Heart right ventricle (tissue), 16 donors: ENCODE measurements at regions of chr16 and their contacts with region 1.

Region 1: GRCh38 chr16:27639561-27640276 is 89.8 kb downstream of the KATNIP start:
- DNase-seq: peak in 1 of 2 donors; percentile 16
- ATAC-seq: peak in 7 of 8 donors; percentile 49 to 80 (median 69)
- H3K4me3 ChIP-seq: no peak overlapping the region
- H3K27ac ChIP-seq: no peak overlapping the region
- H3K4me1 ChIP-seq: no peaks in the 10 kb centered on the region
- H3K27me3 ChIP-seq: no peaks in the 10 kb centered on the region
- CTCF ChIP-seq: peak; percentile 12 to 68 (median 61)

Region 2: DNA sequence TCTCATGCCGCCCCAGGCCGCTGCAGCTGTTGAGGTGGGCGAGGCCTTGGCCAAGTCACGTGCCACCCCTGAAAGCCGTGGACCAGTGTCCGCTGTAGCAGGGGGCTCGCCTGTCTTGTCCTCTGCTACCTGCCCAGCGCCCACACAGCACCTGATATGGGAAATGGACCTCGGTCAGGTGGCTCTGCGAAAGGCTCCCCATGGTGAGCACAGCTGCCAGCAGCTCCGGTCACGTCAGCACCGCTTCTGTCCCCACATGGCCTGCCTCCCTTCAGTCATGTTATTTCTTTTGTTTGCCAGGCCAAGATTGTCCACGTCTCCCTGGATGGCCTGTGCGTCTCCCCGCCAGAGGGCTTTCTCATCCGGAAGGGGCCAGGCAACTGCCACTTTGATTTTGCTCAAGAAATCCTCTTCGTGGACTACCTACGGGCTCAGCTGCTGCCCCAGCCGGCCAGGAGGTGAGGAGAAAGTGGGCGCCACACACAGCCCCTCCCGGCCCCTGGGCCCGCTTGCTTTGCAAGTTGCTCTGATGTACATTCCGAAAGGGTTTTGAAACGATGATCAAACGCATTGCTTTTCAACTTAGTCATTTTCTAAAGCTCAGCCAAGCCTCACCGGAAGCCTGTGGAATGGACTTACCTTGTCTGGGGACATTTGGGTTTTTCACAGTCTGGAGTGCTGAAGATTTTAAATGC is 130.0 kb after region 1 on chr16:
- intact Hi-C with region 1: loop called in 1 of 10 experiments (anchors 10 kb)
- DNase-seq: no peak
- ATAC-seq: peak in 2 of 8 donors; percentile 43 to 49
- H3K4me3 ChIP-seq: no peak overlapping the region
- H3K27ac ChIP-seq: no peak overlapping the region
- H3K4me1 ChIP-seq: no peaks in the 10 kb centered on the region
- H3K27me3 ChIP-seq: no peaks in the 10 kb centered on the region
- CTCF ChIP-seq: no peak

Region 3: DNA sequence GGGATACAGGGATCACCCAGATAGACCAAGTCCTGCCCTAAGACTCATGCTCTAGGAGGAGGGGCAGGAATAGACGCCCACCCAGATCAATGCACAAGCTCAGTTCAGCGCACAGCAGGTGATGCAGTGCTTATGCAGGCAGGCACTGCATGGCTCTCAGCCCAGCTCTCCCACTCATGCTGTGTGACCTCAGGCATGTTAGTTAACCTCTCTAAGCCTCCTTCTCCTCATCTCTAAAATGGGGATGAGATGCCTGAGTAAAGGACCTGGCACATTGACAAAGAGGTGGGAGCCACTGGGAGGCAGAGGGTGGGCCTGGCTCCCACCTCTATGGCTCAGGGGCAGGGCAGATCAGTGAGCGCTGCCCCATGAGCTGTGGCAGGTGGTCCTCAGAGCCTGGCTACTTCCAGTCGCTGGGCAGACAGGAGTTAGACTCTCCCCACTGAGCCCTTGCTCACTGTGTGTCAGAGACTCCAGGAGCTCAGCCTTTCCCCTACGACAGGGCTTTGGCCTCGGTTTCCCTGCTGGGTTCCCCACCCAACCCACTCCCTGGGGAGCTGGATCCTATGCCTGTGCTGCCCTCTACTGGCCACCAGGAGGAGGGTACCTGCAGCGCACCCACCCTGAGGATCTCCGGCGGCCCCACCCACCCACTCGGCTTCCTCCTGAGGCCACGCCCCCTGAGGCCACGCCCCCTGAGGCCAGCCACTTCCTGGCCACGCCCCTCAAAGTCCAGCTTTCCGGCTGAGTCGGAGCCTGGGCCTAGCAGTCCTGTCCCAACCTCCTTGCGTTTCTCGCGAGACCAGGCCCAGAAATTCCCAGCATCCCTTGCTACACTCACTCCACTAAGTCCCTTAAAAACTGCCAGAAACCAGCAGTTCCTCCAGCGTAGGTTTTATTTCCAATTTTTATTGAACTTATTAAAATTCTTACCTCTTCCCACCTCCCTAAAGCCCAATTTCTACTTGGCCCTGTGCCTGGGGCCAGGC is 227.7 kb after region 1 on chr16:
- intact Hi-C with region 1: loop called in 5 of 10 experiments (anchors 5 to 10 kb)
- DNase-seq: peak; percentile 28 to 51
- ATAC-seq: peak; percentile 49 to 86 (median 69)
- H3K4me3 ChIP-seq: no peak overlapping the region
- H3K27ac ChIP-seq: no peak overlapping the region
- H3K4me1 ChIP-seq: no peaks in the 10 kb centered on the region
- H3K27me3 ChIP-seq: peaks cover 0 to 11% (median 0%) of the 10 kb centered on the region in 7 donors
- CTCF ChIP-seq: peak in 7 of 9 donors; percentile 44 to 54 (median 51)

Region 4: DNA sequence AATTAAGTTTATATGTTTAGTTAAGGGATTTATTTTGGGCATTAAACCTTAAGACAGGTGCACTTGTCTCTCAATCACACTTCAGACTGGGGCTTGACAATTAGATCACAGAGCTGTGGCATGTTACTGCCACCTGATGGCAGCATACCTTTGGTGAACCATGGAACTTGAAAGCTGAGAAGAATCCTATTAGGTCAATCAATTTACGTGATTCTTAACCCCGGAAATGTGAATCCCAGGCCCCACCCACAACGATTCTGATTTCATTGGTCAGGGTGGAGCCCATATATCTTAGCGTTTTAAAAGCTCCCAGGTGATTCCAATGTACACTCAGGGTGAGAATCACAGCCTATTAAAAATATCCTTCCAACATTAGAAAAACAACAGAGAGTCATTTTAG is 332.8 kb after region 1 on chr16:
- intact Hi-C with region 1: loop called in 1 of 10 experiments (anchors 10 kb)
- DNase-seq: peak in 1 of 2 donors; percentile 16
- ATAC-seq: peak in 1 of 8 donors; percentile 44
- H3K4me3 ChIP-seq: no peak overlapping the region
- H3K27ac ChIP-seq: no peak overlapping the region
- H3K4me1 ChIP-seq: peaks cover 0 to 3% (median 0%) of the 10 kb centered on the region in 9 donors
- H3K27me3 ChIP-seq: peaks cover 0 to 13% (median 0%) of the 10 kb centered on the region in 7 donors
- CTCF ChIP-seq: peak in 8 of 9 donors; percentile 5 to 59 (median 54)

Region 5: DNA sequence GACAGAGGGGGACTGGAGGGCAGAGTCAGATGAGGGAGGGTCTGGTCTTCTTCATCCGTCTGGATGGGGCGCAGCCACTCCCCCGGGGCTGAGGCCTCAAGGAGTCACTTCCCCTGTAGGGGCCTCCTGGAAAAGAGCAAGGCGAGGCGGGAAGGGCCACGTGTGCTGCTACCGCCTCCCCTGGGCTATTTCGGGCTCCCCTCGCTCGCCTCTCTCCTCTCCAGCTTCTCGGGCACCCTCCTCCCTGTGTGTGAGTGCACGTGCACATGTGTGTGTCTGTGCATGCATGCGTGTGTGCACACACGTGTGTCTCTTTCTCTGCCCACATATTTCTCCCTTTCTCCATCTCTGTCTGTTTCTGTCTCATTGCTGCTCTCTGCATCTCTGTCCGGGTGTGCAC is 413.7 kb after region 1 on chr16:
- intact Hi-C with region 1: no loop called
- DNase-seq: no peak
- ATAC-seq: peak in 3 of 8 donors; percentile 16 to 42 (median 39)
- H3K4me3 ChIP-seq: no peak overlapping the region
- H3K27ac ChIP-seq: no peak overlapping the region
- H3K4me1 ChIP-seq: no peaks in the 10 kb centered on the region
- H3K27me3 ChIP-seq: peaks cover 0 to 70% (median 9%) of the 10 kb centered on the region in 7 donors
- CTCF ChIP-seq: no peak

Region 6: GRCh38 chr16:28063641-28064061 is 423.9 kb after region 1 on chr16 and contains the start of gene GSG1L:
- intact Hi-C with region 1: loop called in 2 of 10 experiments (anchors 5 to 10 kb)
- DNase-seq: no peak
- ATAC-seq: peak; percentile 49 to 78 (median 70)
- H3K4me3 ChIP-seq: peak within 1 kb of the TSS in 6 of 10 donors; percentile 19 to 51 (median 34)
- H3K27ac ChIP-seq: peak within 1 kb of the TSS in 1 of 10 donors; percentile 7
- H3K4me1 ChIP-seq: peaks cover 0 to 11% (median 0%) of the 10 kb centered on the region in 9 donors
- H3K27me3 ChIP-seq: peaks cover 10 to 65% (median 56%) of the 10 kb centered on the region in 7 donors
- CTCF ChIP-seq: peak in 8 of 9 donors; percentile 9 to 46 (median 32)
- total RNA-seq, gene GSG1L: 0.68 to 14.6 (median 3.4) TPM in 7 of 10 donors, not detected in the others

Region 7: DNA sequence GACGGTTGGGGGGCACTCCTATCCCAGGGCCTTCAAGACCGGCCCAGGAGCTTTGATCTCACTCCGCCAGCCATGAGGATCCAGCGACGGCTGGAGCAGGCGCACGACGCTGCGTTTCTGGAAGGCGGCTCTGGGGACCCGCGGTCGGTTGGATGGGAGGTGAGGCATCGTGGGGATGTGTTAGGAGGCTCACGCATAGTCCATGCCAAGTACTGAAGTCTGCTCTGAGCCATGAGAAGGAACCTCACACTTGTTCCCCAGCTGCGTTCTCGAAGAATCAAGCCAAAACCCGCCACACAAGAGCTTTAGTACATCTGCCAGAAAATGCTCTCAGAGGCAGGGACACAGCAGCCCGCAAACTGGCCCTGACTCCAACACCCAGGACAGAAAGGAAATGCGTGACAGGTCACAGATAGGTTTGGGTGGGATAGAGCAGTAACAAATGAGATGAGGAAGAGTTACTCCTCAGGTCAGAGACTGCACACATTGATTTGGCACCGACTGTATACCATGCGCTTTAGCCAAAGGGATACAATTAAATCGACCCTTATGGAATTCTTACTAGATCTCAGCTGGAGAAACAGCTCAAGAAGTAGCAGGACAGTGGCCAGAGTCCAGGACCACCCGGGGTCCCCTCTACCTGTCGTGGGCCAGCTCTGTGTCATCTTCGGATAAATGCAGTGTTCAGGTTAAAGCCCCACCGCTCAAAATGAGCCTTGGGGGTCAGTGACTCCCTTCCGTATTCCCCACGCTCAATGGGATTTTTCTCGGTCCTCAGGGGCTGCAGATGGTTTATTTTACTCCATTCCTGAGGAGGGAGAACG is 430.5 kb after region 1 on chr16:
- intact Hi-C with region 1: loop called in 6 of 10 experiments (anchors 5 to 10 kb)
- DNase-seq: no peak
- ATAC-seq: peak in 2 of 8 donors; percentile 30 to 51
- H3K4me3 ChIP-seq: no peak overlapping the region
- H3K27ac ChIP-seq: no peak overlapping the region
- H3K4me1 ChIP-seq: peaks cover 0 to 16% (median 0%) of the 10 kb centered on the region in 9 donors
- H3K27me3 ChIP-seq: peaks cover 0 to 22% (median under 1%) of the 10 kb centered on the region in 7 donors
- CTCF ChIP-seq: no peak